IMR-90 (cell line): ENCODE measurements at regions of chr1 and their contacts with region 1.

Region 1: DNA sequence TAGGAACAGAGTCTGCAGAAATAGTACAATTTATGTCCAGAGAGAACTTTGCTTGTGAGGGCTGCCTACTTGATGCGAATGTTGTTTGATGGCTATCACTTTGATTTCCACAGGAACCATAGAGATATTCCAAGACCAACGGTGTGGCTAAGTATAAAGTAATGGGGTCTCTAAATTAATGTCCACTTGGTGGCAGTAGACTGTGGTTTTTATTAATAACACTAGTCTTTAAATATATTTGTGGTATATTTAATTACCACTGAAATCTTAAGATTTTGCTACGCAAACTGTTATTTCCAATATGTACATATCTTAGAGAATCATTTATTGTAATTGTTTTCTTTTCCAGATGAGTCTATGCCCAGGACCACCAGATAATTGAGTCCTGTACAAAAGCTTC is 647.9 kb downstream of the PLA2G4A start:
- DNase-seq: peak; percentile 20
- ATAC-seq: 0 out of 2 replicates have a peak, but pooled peaks have one; percentile 53
- H3K4me3 ChIP-seq: no peak overlapping the region
- H3K27ac ChIP-seq: no peak overlapping the region
- H3K4me1 ChIP-seq: peaks cover 2% of the 10 kb centered on the region; the same call in 1 of the 2 replicates
- H3K27me3 ChIP-seq: no peaks in the 10 kb centered on the region
- CTCF ChIP-seq: peak; percentile 49
- POLR2A ChIP-seq: no peak
- RAD21 ChIP-seq: peak; percentile 43

Region 2: GRCh38 chr1:188128761-188129160 is 652.1 kb after region 1 on chr1:
- CTCF ChIA-PET with region 1: no interaction called
- POLR2A ChIA-PET with region 1: no interaction called
- dilution Hi-C with region 1: no loop called
- in situ Hi-C with region 1: no loop called
- intact Hi-C with region 1: loop called (anchors 5 kb)
- DNase-seq: peak; percentile 41
- ATAC-seq: peak; percentile 85
- H3K4me3 ChIP-seq: no peak overlapping the region
- H3K27ac ChIP-seq: no peak overlapping the region
- H3K4me1 ChIP-seq: no peaks in the 10 kb centered on the region
- H3K27me3 ChIP-seq: no peaks in the 10 kb centered on the region
- CTCF ChIP-seq: peak; percentile 46
- POLR2A ChIP-seq: no peak
- RAD21 ChIP-seq: peak; percentile 51